PC-9 (cell line): ENCODE measurements at regions of chr7 and their contacts with region 1.

Region 1: GRCh38 chr7:129454249-129454551 is 20.0 kb downstream of the STRIP2 start:
- DNase-seq: peak; percentile 78 to 99
- H3K4me3 ChIP-seq: 0 out of 2 replicates have a peak overlapping the region, but pooled peaks have one; percentile 7
- H3K27ac ChIP-seq: peak overlapping the region; percentile 95
- H3K4me1 ChIP-seq: peaks cover 46% of the 10 kb centered on the region
- H3K27me3 ChIP-seq: no peaks in the 10 kb centered on the region
- CTCF ChIP-seq: no peak

Region 2: GRCh38 chr7:129433847-129434674 is 20.1 kb before region 1 on chr7 and contains the start of gene STRIP2:
- CTCF ChIA-PET with region 1: no interaction called
- POLR2A ChIA-PET with region 1: interaction called, 13 read pairs
- intact Hi-C with region 1: loop called (anchors 1 kb)
- DNase-seq: peak; percentile 72 to 94
- H3K4me3 ChIP-seq: peak within 1 kb of the TSS; percentile 95
- H3K27ac ChIP-seq: peak within 1 kb of the TSS; percentile 45
- H3K4me1 ChIP-seq: peaks cover 44% of the 10 kb centered on the region
- H3K27me3 ChIP-seq: no peaks in the 10 kb centered on the region
- CTCF ChIP-seq: no peak
- total RNA-seq, gene STRIP2: 6.4 and 9.5 TPM in 2 replicates